CD8-positive, alpha-beta T cell (primary cell): ENCODE measurements at regions of chr3 and their contacts with region 1.

Region 1: GRCh38 chr3:18717598-18717997 is 292.5 kb upstream of the SATB1 start:
- DNase-seq: no peak
- ATAC-seq: peak; percentile 21
- H3K4me3 ChIP-seq: no peak overlapping the region
- H3K4me3 Mint-ChIP-seq: no peak overlapping the region
- H3K27ac ChIP-seq: no peak overlapping the region
- H3K27ac Mint-ChIP-seq: peak overlapping the region; percentile 85
- H3K4me1 ChIP-seq: peaks cover 55% of the 10 kb centered on the region
- H3K4me1 Mint-ChIP-seq: peaks cover 66% of the 10 kb centered on the region
- H3K27me3 ChIP-seq: no peaks in the 10 kb centered on the region
- H3K27me3 Mint-ChIP-seq: no peaks in the 10 kb centered on the region
- CTCF ChIP-seq: no peak

Region 2: GRCh38 chr3:18643281-18643680 is 74.3 kb before region 1 on chr3:
- CTCF ChIA-PET with region 1: no interaction called
- POLR2A ChIA-PET with region 1: no interaction called
- intact Hi-C with region 1: loop called in 1 of 2 experiments (anchors 5 kb)
- DNase-seq: peak in 2 of 9 experiments; percentile 5 to 20
- ATAC-seq: no peak
- H3K4me3 ChIP-seq: no peak overlapping the region
- H3K4me3 Mint-ChIP-seq: no peak overlapping the region
- H3K27ac ChIP-seq: no peak overlapping the region
- H3K27ac Mint-ChIP-seq: no peak overlapping the region
- H3K4me1 ChIP-seq: peaks cover 22% of the 10 kb centered on the region
- H3K4me1 Mint-ChIP-seq: peaks cover 33% of the 10 kb centered on the region
- H3K27me3 ChIP-seq: no peaks in the 10 kb centered on the region
- H3K27me3 Mint-ChIP-seq: no peaks in the 10 kb centered on the region
- CTCF ChIP-seq: no peak

Region 3: DNA sequence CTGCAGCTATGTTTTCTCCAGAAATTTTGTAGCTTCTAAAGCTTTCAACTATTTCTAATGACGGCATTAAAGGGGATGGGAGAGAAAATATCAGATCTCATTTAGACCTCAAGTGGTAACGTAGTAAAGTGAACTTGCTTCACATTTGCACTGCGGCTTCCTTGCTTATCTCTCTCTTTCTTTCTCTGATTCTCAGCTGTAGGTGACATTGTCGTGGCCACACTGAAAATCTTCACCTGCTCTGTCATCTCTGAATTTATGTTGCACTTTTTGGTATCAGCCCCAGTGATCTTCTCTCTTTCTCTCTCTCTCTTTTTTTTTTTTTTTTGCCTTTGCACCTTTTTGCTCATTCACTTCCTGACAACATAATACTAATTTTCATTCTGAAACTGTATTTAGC is 38.4 kb before region 1 on chr3:
- CTCF ChIA-PET with region 1: interaction called, 4 read pairs
- POLR2A ChIA-PET with region 1: no interaction called
- intact Hi-C with region 1: loop called in 1 of 2 experiments (anchors 5 kb)
- DNase-seq: peak in 7 of 9 experiments; percentile 4 to 84 (median 32)
- ATAC-seq: peak; percentile 91
- H3K4me3 ChIP-seq: no peak overlapping the region
- H3K4me3 Mint-ChIP-seq: peak overlapping the region; percentile 50
- H3K27ac ChIP-seq: peak overlapping the region in 1 of 2 experiments; percentile 61
- H3K27ac Mint-ChIP-seq: peak overlapping the region; percentile 75
- H3K4me1 ChIP-seq: peaks cover 39% of the 10 kb centered on the region
- H3K4me1 Mint-ChIP-seq: peaks cover 68% of the 10 kb centered on the region
- H3K27me3 ChIP-seq: no peaks in the 10 kb centered on the region
- H3K27me3 Mint-ChIP-seq: no peaks in the 10 kb centered on the region
- CTCF ChIP-seq: no peak

Region 4: DNA sequence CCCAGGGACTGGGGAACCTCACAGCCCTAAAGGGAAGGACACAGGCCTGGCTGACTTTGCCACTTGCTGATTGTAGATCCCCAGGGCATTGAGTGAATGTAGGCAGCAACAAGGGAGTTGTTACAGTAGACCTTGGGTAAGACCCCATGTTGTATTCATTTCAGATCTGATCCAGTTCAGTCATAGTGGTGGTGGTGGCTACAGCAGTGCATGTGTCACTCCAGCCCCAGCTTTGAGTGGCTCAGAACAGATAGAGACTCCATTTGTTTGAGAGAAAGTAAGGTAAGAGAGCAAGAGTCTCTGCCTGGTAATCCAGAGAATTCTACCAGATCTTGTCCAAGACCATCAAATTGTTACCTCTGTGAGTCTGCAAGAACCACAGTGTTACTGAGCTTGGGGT is 13.8 kb before region 1 on chr3:
- CTCF ChIA-PET with region 1: no interaction called
- POLR2A ChIA-PET with region 1: interaction called, 3 read pairs
- intact Hi-C with region 1: loop called in 1 of 2 experiments (anchors 1 kb)
- DNase-seq: no peak
- ATAC-seq: no peak
- H3K4me3 ChIP-seq: no peak overlapping the region
- H3K4me3 Mint-ChIP-seq: no peak overlapping the region
- H3K27ac ChIP-seq: no peak overlapping the region
- H3K27ac Mint-ChIP-seq: no peak overlapping the region
- H3K4me1 ChIP-seq: no peaks in the 10 kb centered on the region
- H3K4me1 Mint-ChIP-seq: peaks cover 15% of the 10 kb centered on the region
- H3K27me3 ChIP-seq: no peaks in the 10 kb centered on the region
- H3K27me3 Mint-ChIP-seq: no peaks in the 10 kb centered on the region
- CTCF ChIP-seq: no peak

Region 5: GRCh38 chr3:18751514-18751913 is 33.9 kb after region 1 on chr3:
- CTCF ChIA-PET with region 1: no interaction called
- POLR2A ChIA-PET with region 1: interaction called, 3 read pairs
- intact Hi-C with region 1: loop called in 1 of 2 experiments (anchors 5 kb)
- DNase-seq: no peak
- ATAC-seq: no peak
- H3K4me3 ChIP-seq: no peak overlapping the region
- H3K4me3 Mint-ChIP-seq: no peak overlapping the region
- H3K27ac ChIP-seq: no peak overlapping the region
- H3K27ac Mint-ChIP-seq: no peak overlapping the region
- H3K4me1 ChIP-seq: peaks cover 8% of the 10 kb centered on the region
- H3K4me1 Mint-ChIP-seq: peaks cover 63% of the 10 kb centered on the region
- H3K27me3 ChIP-seq: no peaks in the 10 kb centered on the region
- H3K27me3 Mint-ChIP-seq: no peaks in the 10 kb centered on the region
- CTCF ChIP-seq: no peak